ENCODE measurements at regions of chr1 and their contacts with region 1.

Region 1: GRCh38 chr1:23916209-23917131 is 3.3 kb upstream of the CNR2 start:
- DNase-seq: peak; percentile 81
- H3K4me3 ChIP-seq: no peak overlapping the region
- H3K27ac ChIP-seq: no peak overlapping the region
- H3K4me1 ChIP-seq: peaks cover 0 to 26% (median 21%) of the 10 kb centered on the region in 4 donors
- H3K27me3 ChIP-seq: no peaks in the 10 kb centered on the region
- CTCF ChIP-seq: peak in 3 of 4 experiments; percentile 20 to 58 (median 52)
- EP300 ChIP-seq: no peak
- POLR2A ChIP-seq: no peak

Region 2: DNA sequence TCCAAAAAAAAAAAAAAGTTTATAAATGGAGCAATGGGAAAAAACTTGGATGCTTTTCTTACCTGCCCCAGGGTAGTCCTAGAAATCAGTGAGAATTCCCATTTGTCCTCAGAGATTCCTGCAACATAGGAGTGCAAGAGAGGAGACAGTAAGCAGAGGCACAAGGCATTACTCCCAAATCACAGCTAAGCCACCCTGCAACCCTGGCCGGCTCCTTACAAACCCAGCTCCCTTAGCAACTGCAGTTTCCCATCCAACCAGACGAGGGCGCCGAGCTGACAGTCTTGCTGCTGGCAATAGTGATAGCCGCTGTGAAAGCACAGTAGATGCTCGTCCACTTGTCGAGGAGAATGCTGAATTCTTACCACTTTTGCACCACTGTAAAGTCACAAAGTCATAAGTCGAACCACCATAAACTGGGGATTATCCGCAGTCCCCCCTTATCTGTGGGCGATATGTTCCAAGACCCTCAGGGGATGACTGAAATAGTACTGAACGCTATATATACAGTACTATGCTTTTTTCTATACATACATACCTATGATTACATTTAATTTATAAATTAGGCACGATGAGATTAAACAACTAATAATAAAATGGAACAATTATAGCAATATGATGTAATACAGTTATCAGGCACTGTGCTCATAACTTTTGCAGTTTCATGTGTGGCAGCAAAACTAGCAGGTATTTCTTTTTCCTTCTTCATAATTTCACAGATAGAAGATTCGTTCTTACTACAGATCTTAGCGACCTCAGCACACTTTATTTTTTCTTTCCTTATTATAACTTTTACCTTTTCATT is 144.2 kb before region 1 on chr1:
- intact Hi-C with region 1: loop called (anchors 2 kb)
- DNase-seq: peak; percentile 91
- H3K4me3 ChIP-seq: no peak overlapping the region
- H3K27ac ChIP-seq: no peak overlapping the region
- H3K4me1 ChIP-seq: peaks cover 0 to 19% (median 7%) of the 10 kb centered on the region in 4 donors
- H3K27me3 ChIP-seq: no peaks in the 10 kb centered on the region
- CTCF ChIP-seq: peak; percentile 70 to 89 (median 74)
- EP300 ChIP-seq: no peak
- POLR2A ChIP-seq: no peak

Region 3: GRCh38 chr1:23809751-23810171 is 106.7 kb before region 1 on chr1:
- intact Hi-C with region 1: loop called (anchors 5 kb)
- DNase-seq: peak; percentile 83
- H3K4me3 ChIP-seq: no peak overlapping the region
- H3K27ac ChIP-seq: peak overlapping the region in 3 of 4 donors; percentile 10 to 58 (median 46)
- H3K4me1 ChIP-seq: peaks cover 0 to 6% (median 2%) of the 10 kb centered on the region in 4 donors
- H3K27me3 ChIP-seq: no peaks in the 10 kb centered on the region
- CTCF ChIP-seq: peak; percentile 44 to 73 (median 58)
- EP300 ChIP-seq: no peak
- POLR2A ChIP-seq: no peak